ENCODE measurements at regions of chr7 and their contacts with region 1.

Region 1: GRCh38 chr7:24836084-24836483 is 78.8 kb upstream of the GSDME start:
- DNase-seq: no peak
- H3K4me3 ChIP-seq: no peak overlapping the region
- H3K27ac ChIP-seq: no peak overlapping the region
- H3K4me1 ChIP-seq: no peaks in the 10 kb centered on the region
- H3K27me3 ChIP-seq: no peaks in the 10 kb centered on the region
- CTCF ChIP-seq: no peak
- EP300 ChIP-seq: no peak
- POLR2A ChIP-seq: no peak
- RAD21 ChIP-seq: no peak

Region 2: GRCh38 chr7:25069900-25070443 is 233.9 kb after region 1 on chr7:
- CTCF ChIA-PET with region 1: interaction called, 11 read pairs
- POLR2A ChIA-PET with region 1: no interaction called
- DNase-seq: peak in 1 of 2 experiments; percentile 53
- H3K4me3 ChIP-seq: no peak overlapping the region
- H3K27ac ChIP-seq: no peak overlapping the region
- H3K4me1 ChIP-seq: no peaks in the 10 kb centered on the region; a peak in 2 of 7 replicates
- H3K27me3 ChIP-seq: no peaks in the 10 kb centered on the region
- CTCF ChIP-seq: peak in 2 of 3 experiments; percentile 76 to 77; a peak in 3 of 4 replicates
- EP300 ChIP-seq: no peak
- POLR2A ChIP-seq: no peak
- RAD21 ChIP-seq: peak; percentile 81 to 84